ENCODE measurements at regions of chr5 and their contacts with region 1.

Region 1: DNA sequence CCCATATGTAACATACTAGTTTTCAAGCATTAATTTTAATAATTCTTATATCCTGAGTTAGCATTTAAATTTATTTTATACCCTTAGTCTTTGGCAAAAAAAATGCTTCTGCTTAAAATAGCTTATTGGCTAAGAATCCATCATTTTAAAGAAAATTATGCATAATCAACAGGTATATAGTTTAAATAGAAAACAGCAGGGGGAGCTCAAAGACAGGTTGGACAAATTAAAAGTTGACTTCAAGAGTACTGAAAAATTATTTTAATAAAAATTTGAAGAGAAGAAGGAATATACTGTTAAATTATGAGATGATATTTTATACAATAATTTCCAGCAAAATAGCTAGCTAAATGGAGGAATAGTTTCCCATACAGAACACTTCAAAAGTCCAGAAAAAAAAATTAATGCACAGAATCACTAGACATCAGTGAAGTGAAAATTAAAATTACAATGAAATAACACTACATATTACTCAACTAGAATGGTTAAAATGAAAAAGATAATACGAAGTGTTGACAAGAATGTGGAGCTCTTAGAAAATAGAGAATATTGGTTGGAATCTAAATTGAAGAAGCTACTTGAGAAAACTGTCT is 387.1 kb downstream of the PDE4D start:
- DNase-seq: no peak
- H3K4me3 ChIP-seq: no peak overlapping the region
- H3K4me3 Mint-ChIP-seq: no peak overlapping the region
- H3K27ac Mint-ChIP-seq: no peak overlapping the region
- H3K4me1 ChIP-seq: no peaks in the 10 kb centered on the region
- H3K4me1 Mint-ChIP-seq: no peaks in the 10 kb centered on the region
- H3K27me3 ChIP-seq: no peaks in the 10 kb centered on the region
- H3K27me3 Mint-ChIP-seq: no peaks in the 10 kb centered on the region
- CTCF ChIP-seq: peak; percentile 45 to 74

Region 2: GRCh38 chr5:59275510-59276324 is 230.7 kb before region 1 on chr5:
- CTCF ChIA-PET with region 1: no interaction called
- POLR2A ChIA-PET with region 1: no interaction called
- intact Hi-C with region 1: no loop called
- DNase-seq: no peak
- H3K4me3 ChIP-seq: peak overlapping the region; percentile 25
- H3K4me3 Mint-ChIP-seq: peak overlapping the region; percentile 73
- H3K27ac Mint-ChIP-seq: peak overlapping the region; percentile 10
- H3K4me1 ChIP-seq: no peaks in the 10 kb centered on the region
- H3K4me1 Mint-ChIP-seq: no peaks in the 10 kb centered on the region
- H3K27me3 ChIP-seq: no peaks in the 10 kb centered on the region
- H3K27me3 Mint-ChIP-seq: no peaks in the 10 kb centered on the region
- CTCF ChIP-seq: no peak

Region 3: DNA sequence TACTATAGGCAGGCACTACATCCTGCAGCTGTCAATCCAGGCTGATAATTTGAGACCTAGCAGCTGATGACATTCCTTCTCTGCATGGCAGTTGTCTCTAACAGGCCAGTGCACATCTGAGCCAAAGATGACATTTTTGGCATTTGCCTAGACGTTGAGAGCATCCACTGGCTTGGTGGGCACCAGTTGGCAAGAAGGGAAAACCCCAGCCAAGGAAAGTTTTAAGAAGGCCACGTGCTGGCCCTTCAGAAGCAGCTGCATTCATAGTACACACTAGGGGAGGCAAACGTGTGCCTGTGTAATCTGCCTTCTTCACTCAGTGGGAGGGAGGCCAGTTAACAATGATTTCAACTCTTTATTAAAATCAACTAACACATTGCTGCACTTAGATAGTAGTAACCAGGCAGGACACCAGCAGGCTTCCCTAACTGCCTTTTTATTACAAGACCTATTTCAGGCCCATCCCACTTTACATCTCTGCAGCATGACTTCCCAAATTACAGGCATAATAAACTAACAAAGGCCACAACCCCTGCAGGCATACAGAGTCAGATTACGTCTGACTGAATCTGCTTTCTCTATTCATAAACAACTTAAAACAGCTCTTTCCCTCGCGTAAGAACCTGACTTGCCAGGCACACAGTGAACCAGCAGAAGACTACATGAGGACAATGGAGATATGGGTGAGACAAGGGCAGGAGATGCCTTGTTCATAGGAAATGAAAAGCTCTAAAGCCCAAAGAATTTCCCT is 189.2 kb before region 1 on chr5:
- CTCF ChIA-PET with region 1: no interaction called
- POLR2A ChIA-PET with region 1: no interaction called
- intact Hi-C with region 1: no loop called
- DNase-seq: no peak
- H3K4me3 ChIP-seq: no peak overlapping the region
- H3K4me3 Mint-ChIP-seq: no peak overlapping the region
- H3K27ac Mint-ChIP-seq: no peak overlapping the region
- H3K4me1 ChIP-seq: peaks cover 5% of the 10 kb centered on the region; the same call in 1 of the 2 replicates
- H3K4me1 Mint-ChIP-seq: no peaks in the 10 kb centered on the region
- H3K27me3 ChIP-seq: no peaks in the 10 kb centered on the region
- H3K27me3 Mint-ChIP-seq: no peaks in the 10 kb centered on the region
- CTCF ChIP-seq: no peak

Region 4: DNA sequence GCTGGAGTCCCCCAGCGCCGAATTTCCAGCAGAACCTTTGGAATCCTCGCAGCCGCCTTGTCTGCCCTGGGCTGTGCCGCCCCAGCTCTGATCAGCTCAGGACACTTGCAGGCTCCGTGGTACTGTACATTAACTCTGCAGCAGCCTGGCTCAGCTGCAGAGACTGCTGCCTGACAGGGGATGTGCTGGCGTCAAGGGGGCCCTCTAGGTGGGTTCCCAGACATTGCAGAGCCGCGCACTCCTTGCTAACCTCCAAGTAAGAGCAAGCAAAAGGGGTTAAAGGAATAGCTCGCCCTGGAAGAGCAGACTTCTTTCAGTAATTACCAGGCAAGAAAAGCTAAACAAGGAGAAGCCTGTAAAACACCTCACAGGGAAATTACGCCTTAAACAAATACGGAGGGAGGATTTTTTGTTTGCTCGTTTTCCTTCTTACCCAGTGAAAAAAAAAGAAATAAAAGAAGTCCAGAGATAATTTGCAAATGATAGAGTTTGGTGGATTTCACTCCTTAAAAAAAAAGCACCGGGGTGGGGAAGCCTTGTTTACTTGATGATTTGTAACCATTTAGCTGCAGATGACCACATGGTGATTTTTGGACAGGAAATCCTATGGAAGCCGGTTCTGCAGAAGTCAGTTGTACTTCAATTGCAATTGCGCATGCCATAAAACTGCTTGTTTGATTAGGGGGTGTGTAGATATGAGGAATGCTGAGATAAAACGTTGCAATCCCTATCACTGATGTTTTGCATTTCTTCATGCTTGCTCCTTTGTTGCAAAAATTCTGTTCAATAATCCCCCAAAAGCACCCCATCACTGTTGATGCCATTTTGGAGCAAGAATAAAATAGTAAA is 81.3 kb after region 1 on chr5:
- CTCF ChIA-PET with region 1: interaction called, 3 read pairs
- POLR2A ChIA-PET with region 1: no interaction called
- intact Hi-C with region 1: loop called (anchors 1 kb)
- DNase-seq: peak; percentile 71 to 76
- H3K4me3 ChIP-seq: peak overlapping the region; percentile 27
- H3K4me3 Mint-ChIP-seq: peak overlapping the region; percentile 73
- H3K27ac Mint-ChIP-seq: peak overlapping the region; percentile 8
- H3K4me1 ChIP-seq: peaks cover 29% of the 10 kb centered on the region
- H3K4me1 Mint-ChIP-seq: peaks cover 15% of the 10 kb centered on the region
- H3K27me3 ChIP-seq: no peaks in the 10 kb centered on the region
- H3K27me3 Mint-ChIP-seq: no peaks in the 10 kb centered on the region
- CTCF ChIP-seq: peak; percentile 21 to 57

Region 5: DNA sequence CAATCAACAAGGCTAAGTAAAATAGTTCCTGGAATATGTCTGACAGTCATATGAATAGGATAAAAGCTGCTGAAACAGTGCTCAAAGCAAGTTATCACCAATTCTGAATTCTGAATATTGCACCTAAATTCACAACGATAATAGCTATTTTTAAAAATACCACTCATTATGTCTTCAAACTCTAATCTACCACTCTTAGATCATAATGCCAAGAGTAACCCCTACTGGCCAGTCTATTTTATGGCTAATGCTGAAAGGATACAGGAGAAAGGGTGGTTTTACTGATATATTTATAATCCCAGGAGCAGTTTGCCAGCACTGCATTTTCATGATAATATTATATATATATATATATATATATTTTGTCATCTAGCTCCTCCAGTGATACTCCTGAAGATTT is 154.4 kb after region 1 on chr5:
- CTCF ChIA-PET with region 1: interaction called, 9 read pairs
- POLR2A ChIA-PET with region 1: no interaction called
- intact Hi-C with region 1: loop called (anchors 1 kb)
- DNase-seq: peak in 1 of 2 experiments; percentile 18
- H3K4me3 ChIP-seq: no peak overlapping the region
- H3K4me3 Mint-ChIP-seq: no peak overlapping the region
- H3K27ac Mint-ChIP-seq: no peak overlapping the region
- H3K4me1 ChIP-seq: peaks cover 17% of the 10 kb centered on the region
- H3K4me1 Mint-ChIP-seq: peaks cover 7% of the 10 kb centered on the region
- H3K27me3 ChIP-seq: no peaks in the 10 kb centered on the region
- H3K27me3 Mint-ChIP-seq: no peaks in the 10 kb centered on the region
- CTCF ChIP-seq: peak in 1 of 2 experiments; percentile 29

Region 6: GRCh38 chr5:59673438-59674058 is 167.2 kb after region 1 on chr5:
- CTCF ChIA-PET with region 1: interaction called, 21 read pairs
- POLR2A ChIA-PET with region 1: no interaction called
- intact Hi-C with region 1: loop called (anchors 1 kb)
- DNase-seq: peak in 1 of 2 experiments; percentile 52
- H3K4me3 ChIP-seq: no peak overlapping the region
- H3K4me3 Mint-ChIP-seq: no peak overlapping the region
- H3K27ac Mint-ChIP-seq: no peak overlapping the region
- H3K4me1 ChIP-seq: no peaks in the 10 kb centered on the region
- H3K4me1 Mint-ChIP-seq: no peaks in the 10 kb centered on the region
- H3K27me3 ChIP-seq: no peaks in the 10 kb centered on the region
- H3K27me3 Mint-ChIP-seq: peaks cover 2% of the 10 kb centered on the region
- CTCF ChIP-seq: peak; percentile 75 to 84

Region 7: GRCh38 chr5:59724482-59725391 is 218.4 kb after region 1 on chr5:
- CTCF ChIA-PET with region 1: no interaction called
- POLR2A ChIA-PET with region 1: no interaction called
- intact Hi-C with region 1: loop called (anchors 1 kb)
- DNase-seq: peak; percentile 48 to 64
- H3K4me3 ChIP-seq: no peak overlapping the region
- H3K4me3 Mint-ChIP-seq: no peak overlapping the region
- H3K27ac Mint-ChIP-seq: no peak overlapping the region
- H3K4me1 ChIP-seq: no peaks in the 10 kb centered on the region
- H3K4me1 Mint-ChIP-seq: no peaks in the 10 kb centered on the region
- H3K27me3 ChIP-seq: no peaks in the 10 kb centered on the region
- H3K27me3 Mint-ChIP-seq: peaks cover 3% of the 10 kb centered on the region
- CTCF ChIP-seq: peak; percentile 72 to 83

Region 8: GRCh38 chr5:59799668-59800346 is 293.4 kb after region 1 on chr5:
- CTCF ChIA-PET with region 1: interaction called, 8 read pairs
- POLR2A ChIA-PET with region 1: no interaction called
- intact Hi-C with region 1: loop called (anchors 2 kb)
- DNase-seq: peak in 1 of 2 experiments; percentile 56
- H3K4me3 ChIP-seq: no peak overlapping the region
- H3K4me3 Mint-ChIP-seq: no peak overlapping the region
- H3K27ac Mint-ChIP-seq: no peak overlapping the region
- H3K4me1 ChIP-seq: no peaks in the 10 kb centered on the region
- H3K4me1 Mint-ChIP-seq: no peaks in the 10 kb centered on the region
- H3K27me3 ChIP-seq: no peaks in the 10 kb centered on the region; the same call in 1 of the 2 replicates
- H3K27me3 Mint-ChIP-seq: peaks cover 15% of the 10 kb centered on the region
- CTCF ChIP-seq: peak; percentile 63 to 70